Thyroid gland (tissue), 4 donors: ENCODE measurements at regions of chr17 and their contacts with region 1.

Region 1: DNA sequence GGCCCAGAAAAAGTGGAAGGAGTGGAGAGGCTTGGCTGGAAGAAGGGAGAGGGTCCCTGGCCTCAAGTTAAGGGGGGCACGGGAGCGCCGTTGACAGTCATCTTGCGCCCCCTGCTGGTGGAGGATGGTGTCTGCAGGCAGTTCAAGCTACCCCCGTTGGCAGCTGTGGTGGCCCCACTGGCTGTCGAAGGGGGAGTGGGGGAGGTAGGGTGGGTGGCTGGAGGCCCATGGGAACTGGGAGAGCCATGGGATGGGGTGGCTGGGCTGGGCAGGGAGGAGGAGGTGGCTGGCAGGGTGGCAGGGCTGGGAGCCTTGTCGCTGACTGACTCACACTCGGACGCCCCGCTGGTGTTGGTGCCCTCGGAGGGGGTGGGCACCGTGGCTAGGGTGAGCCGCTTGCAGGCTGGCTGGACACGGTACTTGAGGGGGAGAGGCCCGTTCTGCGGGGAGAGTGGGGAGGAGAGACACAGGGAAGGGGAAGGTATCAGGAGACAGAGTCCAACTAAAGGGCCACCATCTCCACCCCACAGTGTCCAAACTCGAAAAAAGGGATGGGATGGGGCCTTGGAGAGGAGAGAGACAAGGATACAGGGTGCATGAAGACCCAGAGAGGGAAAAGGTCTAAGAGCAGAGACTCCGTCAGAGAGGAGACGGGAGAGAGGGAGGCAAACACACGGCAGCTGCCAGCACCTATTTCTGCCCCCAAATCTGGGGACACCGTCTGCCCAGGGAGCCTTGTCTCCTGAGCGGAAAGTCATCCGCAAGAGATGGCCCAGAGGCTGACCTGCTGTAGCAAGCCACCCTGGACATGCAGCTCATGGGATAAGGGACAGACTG is 5.2 kb downstream of the CISD3 start:
- DNase-seq: peak; percentile 57
- H3K4me3 ChIP-seq: no peak overlapping the region
- H3K27ac ChIP-seq: no peak overlapping the region
- H3K4me1 ChIP-seq: peaks cover 27 to 36% of the 10 kb centered on the region in 2 donors
- H3K27me3 ChIP-seq: no peaks in the 10 kb centered on the region
- CTCF ChIP-seq: peak; percentile 80 to 93 (median 86)
- POLR2A ChIP-seq: no peak

Region 2: GRCh38 chr17:38579934-38580333 is 155.4 kb before region 1 on chr17:
- intact Hi-C with region 1: no loop called
- DNase-seq: peak in 1 of 2 donors; percentile 43
- H3K4me3 ChIP-seq: no peak overlapping the region
- H3K27ac ChIP-seq: no peak overlapping the region
- H3K4me1 ChIP-seq: peaks cover 6 to 13% of the 10 kb centered on the region in 2 donors
- H3K27me3 ChIP-seq: peaks cover 9% of the 10 kb centered on the region
- CTCF ChIP-seq: no peak
- POLR2A ChIP-seq: no peak

Region 3: GRCh38 chr17:38591759-38592241 is 143.6 kb before region 1 on chr17:
- intact Hi-C with region 1: no loop called
- DNase-seq: no peak
- H3K4me3 ChIP-seq: no peak overlapping the region
- H3K27ac ChIP-seq: peak overlapping the region in 2 of 3 donors; percentile 46 to 53
- H3K4me1 ChIP-seq: peaks cover 7 to 24% of the 10 kb centered on the region in 2 donors
- H3K27me3 ChIP-seq: no peaks in the 10 kb centered on the region
- CTCF ChIP-seq: no peak
- POLR2A ChIP-seq: no peak

Region 4: DNA sequence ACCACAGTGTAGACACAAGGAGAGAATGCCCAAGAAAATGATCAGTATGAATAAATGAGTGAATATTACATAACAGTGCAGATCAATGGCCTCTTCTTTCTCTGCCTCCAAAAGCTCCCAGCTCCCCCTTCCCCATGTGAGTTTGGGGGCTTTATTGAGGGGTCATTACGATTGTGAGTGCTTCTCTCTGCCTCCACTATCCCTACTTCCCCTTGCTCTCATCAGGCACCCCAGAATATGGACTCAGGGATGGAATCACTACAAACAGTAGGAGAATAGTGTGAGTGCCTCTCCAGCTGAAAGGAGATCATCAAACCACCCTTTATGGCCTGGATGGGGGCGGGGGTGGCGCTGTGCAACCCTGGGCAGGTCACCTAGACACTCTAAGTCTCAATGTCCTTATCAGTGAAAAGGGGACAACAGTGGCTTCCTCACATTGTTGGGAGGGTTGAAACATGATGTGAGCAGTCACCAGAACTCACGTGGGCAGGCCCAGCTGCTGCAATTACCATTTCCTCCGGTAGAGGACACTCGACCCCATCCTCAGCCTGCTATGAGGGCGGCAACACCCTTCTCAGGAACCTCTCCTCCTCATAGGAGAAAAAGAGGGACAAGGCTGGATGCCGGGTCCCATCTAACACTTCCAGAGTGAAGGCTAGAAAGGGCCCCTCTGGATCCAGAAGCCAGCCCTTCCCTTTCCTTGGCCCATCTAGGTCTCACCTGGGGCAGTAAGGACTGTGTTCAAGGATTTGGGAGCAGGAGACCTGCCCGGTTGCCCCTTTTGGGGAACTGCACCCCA is 58.5 kb before region 1 on chr17:
- intact Hi-C with region 1: loop called (anchors 2 kb)
- DNase-seq: peak; percentile 80 to 81
- H3K4me3 ChIP-seq: no peak overlapping the region
- H3K27ac ChIP-seq: no peak overlapping the region
- H3K4me1 ChIP-seq: peaks cover 12 to 26% of the 10 kb centered on the region in 2 donors
- H3K27me3 ChIP-seq: peaks cover 30% of the 10 kb centered on the region
- CTCF ChIP-seq: peak; percentile 92 to 96 (median 92)
- POLR2A ChIP-seq: no peak

Region 5: DNA sequence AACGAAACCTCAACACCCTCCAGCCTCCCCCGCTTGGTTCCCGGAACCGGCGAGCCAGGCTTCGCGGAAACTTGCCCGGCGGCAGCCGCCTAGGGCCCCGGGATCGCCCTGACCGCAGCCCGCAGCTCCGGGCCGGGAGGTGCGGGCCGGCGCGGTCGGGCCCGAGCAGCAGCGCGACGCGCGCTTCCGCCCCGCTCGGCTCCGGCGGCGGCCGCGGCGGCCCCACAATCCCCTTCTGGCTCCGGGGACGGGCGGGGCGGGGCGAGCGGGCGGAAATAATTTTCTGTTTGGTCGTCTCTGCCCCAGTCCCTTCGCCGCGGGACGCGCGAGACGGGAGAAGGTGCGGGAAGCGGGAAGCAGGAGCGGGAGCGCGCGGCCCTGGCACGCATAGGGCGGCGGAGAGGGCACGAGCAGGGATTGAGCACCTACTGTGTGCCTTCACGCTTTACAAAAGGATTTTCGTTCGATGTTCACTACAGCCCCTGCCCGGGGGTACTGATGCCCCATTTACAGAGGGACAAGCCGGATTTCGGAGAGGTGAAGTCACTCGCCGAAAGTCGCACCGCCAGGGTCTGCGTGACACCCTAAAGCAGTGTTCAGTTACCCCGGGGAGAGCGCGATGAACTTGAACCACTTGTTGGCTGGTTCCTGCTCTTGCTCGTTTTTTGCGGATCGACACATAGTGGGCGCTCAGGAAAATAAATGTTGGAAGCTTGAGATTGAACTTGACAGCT is 33.0 kb before region 1 on chr17:
- intact Hi-C with region 1: loop called (anchors 5 kb)
- DNase-seq: peak; percentile 86 to 90
- H3K4me3 ChIP-seq: peak overlapping the region; percentile 30 to 100 (median 95)
- H3K27ac ChIP-seq: peak overlapping the region; percentile 97 to 99 (median 97)
- H3K4me1 ChIP-seq: peaks cover 16 to 30% of the 10 kb centered on the region in 2 donors
- H3K27me3 ChIP-seq: no peaks in the 10 kb centered on the region
- CTCF ChIP-seq: no peak
- POLR2A ChIP-seq: peak; percentile 28 to 89